Mammary epithelial cell (primary cell): ENCODE measurements at regions of chr16 and their contacts with region 1.

Region 1: DNA sequence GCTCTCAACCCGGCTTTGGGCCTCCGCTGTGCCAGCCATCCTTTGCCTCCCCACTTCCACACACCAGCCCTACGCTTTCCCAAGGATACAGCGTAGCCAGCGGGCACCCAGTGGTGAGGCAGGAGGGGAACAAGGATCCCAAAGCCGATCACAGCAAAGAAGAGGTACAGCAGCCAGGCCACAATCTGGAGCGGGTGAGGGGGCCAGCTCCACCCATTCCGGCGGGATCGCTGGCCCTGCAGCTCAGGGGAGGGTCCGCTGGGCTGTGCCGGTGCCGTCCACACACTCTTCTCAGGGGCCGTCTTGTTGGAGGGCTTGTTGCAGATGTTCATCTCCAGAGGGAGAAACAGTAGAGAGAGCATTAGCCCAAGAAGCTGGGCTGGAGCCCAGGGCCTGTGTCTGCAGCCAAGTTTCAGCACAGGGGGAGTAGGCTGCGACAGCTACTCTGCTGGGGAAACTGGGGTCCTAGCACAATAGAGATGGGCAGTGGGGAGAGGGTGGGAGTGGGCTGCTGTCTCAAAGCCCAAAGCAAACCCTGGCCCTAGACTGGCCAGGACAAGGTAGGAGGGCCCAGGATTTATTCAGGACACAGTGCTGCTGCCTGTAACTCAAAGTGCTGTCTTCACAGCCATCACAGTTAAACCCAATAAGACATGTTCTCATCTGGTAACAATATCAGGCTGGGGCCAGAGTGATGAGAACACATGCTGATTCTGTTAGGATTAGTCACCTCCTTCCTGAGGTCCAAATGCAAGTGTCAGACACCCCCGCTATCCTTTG is 10.0 kb downstream of the ZDHHC1 start:
- DNase-seq: peak; percentile 75
- H3K4me3 ChIP-seq: no peak overlapping the region
- H3K27ac ChIP-seq: peak overlapping the region; percentile 90
- H3K4me1 ChIP-seq: peaks cover 57% of the 10 kb centered on the region
- H3K27me3 ChIP-seq: no peaks in the 10 kb centered on the region
- CTCF ChIP-seq: no peak

Region 2: DNA sequence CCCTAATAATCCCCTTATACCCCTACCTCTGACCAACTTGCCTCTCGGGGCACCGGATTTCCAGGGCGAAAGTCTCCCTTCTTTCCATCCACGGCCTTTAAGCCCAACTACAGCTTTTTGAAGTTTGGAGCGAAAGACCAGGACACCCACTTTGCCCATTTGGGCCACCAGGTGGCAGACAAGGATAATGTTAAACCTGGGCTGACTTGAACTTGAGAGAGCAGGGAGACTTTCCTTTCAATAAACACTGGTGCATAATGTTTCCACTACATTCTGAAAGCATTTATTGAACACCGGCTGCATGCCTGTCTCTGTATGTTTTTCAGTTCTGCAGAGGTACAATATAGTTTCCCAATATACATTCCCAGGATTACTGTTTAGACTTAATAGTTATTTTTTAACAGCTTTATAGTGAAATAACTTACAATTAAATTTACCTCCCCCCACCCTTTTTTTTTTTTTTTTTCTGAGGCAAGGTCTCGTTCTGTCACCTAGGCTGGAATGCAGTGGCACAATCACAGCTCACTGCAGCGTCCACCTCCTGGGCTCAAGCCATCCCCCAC is 452.1 kb before region 1 on chr16:
- CTCF ChIA-PET with region 1: no interaction called
- dilution Hi-C with region 1: no loop called
- in situ Hi-C with region 1: no loop called
- intact Hi-C with region 1: loop called (anchors 10 kb)
- DNase-seq: peak; percentile 68
- H3K4me3 ChIP-seq: no peak overlapping the region
- H3K27ac ChIP-seq: no peak overlapping the region
- H3K4me1 ChIP-seq: peaks cover 16% of the 10 kb centered on the region
- H3K27me3 ChIP-seq: no peaks in the 10 kb centered on the region
- CTCF ChIP-seq: peak; percentile 83 to 86